IMR-90 (cell line): ENCODE measurements at regions of chr1 and their contacts with region 1.

Region 1: GRCh38 chr1:246566128-246566812 is at the starts of genes CNST and TFB2M:
- DNase-seq: peak; percentile 99
- ATAC-seq: peak; percentile 97
- H3K4me3 ChIP-seq: peak within 1 kb of the TSS; percentile 81
- H3K27ac ChIP-seq: peak within 1 kb of the TSS; percentile 73
- H3K4me1 ChIP-seq: peaks cover 5% of the 10 kb centered on the region; the same call in 1 of the 2 replicates
- H3K27me3 ChIP-seq: no peaks in the 10 kb centered on the region
- CTCF ChIP-seq: no peak
- POLR2A ChIP-seq: peak; percentile 90
- RAD21 ChIP-seq: no peak
- total RNA-seq, gene CNST: 25.5 and 32.8 TPM in 2 replicates
- total RNA-seq, gene TFB2M: 13.3 and 22.8 TPM in 2 replicates

Region 2: GRCh38 chr1:246261639-246262038 is 304.6 kb before region 1 on chr1:
- CTCF ChIA-PET with region 1: no interaction called
- POLR2A ChIA-PET with region 1: no interaction called
- dilution Hi-C with region 1: no loop called
- in situ Hi-C with region 1: no loop called
- intact Hi-C with region 1: no loop called
- DNase-seq: peak; percentile 8
- ATAC-seq: no peak
- H3K4me3 ChIP-seq: no peak overlapping the region
- H3K27ac ChIP-seq: no peak overlapping the region
- H3K4me1 ChIP-seq: no peaks in the 10 kb centered on the region
- H3K27me3 ChIP-seq: no peaks in the 10 kb centered on the region
- CTCF ChIP-seq: no peak; the same call in 1 of the 2 replicates
- POLR2A ChIP-seq: no peak
- RAD21 ChIP-seq: no peak

Region 3: GRCh38 chr1:246518441-246519205 is 47.6 kb before region 1 on chr1:
- CTCF ChIA-PET with region 1: no interaction called
- POLR2A ChIA-PET with region 1: no interaction called
- dilution Hi-C with region 1: no loop called
- in situ Hi-C with region 1: no loop called
- intact Hi-C with region 1: no loop called
- DNase-seq: no peak
- ATAC-seq: no peak
- H3K4me3 ChIP-seq: no peak overlapping the region
- H3K27ac ChIP-seq: no peak overlapping the region
- H3K4me1 ChIP-seq: no peaks in the 10 kb centered on the region
- H3K27me3 ChIP-seq: peaks cover 2% of the 10 kb centered on the region; the same call in 1 of the 2 replicates
- CTCF ChIP-seq: no peak
- POLR2A ChIP-seq: no peak
- RAD21 ChIP-seq: no peak

Region 4: DNA sequence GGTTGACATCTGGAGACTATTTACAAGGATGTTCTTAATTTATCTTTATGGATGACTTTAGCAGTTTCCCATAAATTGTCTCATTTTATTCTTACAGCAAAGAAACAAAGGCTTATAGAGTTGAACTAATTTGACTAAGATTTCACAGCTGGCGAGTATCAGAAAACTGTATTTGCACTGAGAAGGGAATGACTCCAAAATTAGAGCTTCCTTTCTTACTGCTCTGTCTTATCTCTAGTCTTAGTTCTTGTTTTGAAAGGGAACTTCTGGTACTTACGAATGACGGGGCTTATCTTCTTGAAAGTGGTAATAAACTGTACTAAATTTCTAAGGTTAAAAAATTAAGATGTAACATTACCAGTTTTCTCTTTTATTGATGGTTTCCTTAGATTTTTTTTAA is 13.5 kb after region 1 on chr1:
- CTCF ChIA-PET with region 1: interaction called, 4 read pairs
- POLR2A ChIA-PET with region 1: interaction called, 15 read pairs
- dilution Hi-C with region 1: no loop called
- in situ Hi-C with region 1: no loop called
- intact Hi-C with region 1: no loop called
- DNase-seq: no peak
- ATAC-seq: no peak
- H3K4me3 ChIP-seq: no peak overlapping the region
- H3K27ac ChIP-seq: no peak overlapping the region
- H3K4me1 ChIP-seq: peaks cover 16% of the 10 kb centered on the region
- H3K27me3 ChIP-seq: no peaks in the 10 kb centered on the region
- CTCF ChIP-seq: no peak
- POLR2A ChIP-seq: no peak
- RAD21 ChIP-seq: no peak

Region 5: GRCh38 chr1:246597340-246597739 is 31.1 kb after region 1 on chr1:
- CTCF ChIA-PET with region 1: no interaction called
- POLR2A ChIA-PET with region 1: no interaction called
- dilution Hi-C with region 1: no loop called
- in situ Hi-C with region 1: no loop called
- intact Hi-C with region 1: loop called (anchors 2 kb)
- DNase-seq: peak; percentile 94
- ATAC-seq: peak; percentile 63
- H3K4me3 ChIP-seq: no peak overlapping the region
- H3K27ac ChIP-seq: no peak overlapping the region
- H3K4me1 ChIP-seq: peaks cover 11% of the 10 kb centered on the region
- H3K27me3 ChIP-seq: no peaks in the 10 kb centered on the region
- CTCF ChIP-seq: no peak
- POLR2A ChIP-seq: peak; percentile 45; the same call in 1 of the 2 replicates
- RAD21 ChIP-seq: 0 out of 2 replicates have a peak, but pooled peaks have one; percentile 2

Region 6: GRCh38 chr1:246608616-246609376 is 42.5 kb after region 1 on chr1:
- CTCF ChIA-PET with region 1: interaction called, 3 read pairs
- POLR2A ChIA-PET with region 1: interaction called, 3 read pairs
- dilution Hi-C with region 1: no loop called
- in situ Hi-C with region 1: no loop called
- intact Hi-C with region 1: loop called (anchors 2 kb)
- DNase-seq: peak; percentile 97
- ATAC-seq: peak; percentile 94
- H3K4me3 ChIP-seq: no peak overlapping the region
- H3K27ac ChIP-seq: peak overlapping the region; percentile 62
- H3K4me1 ChIP-seq: peaks cover 8% of the 10 kb centered on the region
- H3K27me3 ChIP-seq: no peaks in the 10 kb centered on the region
- CTCF ChIP-seq: peak; percentile 43
- POLR2A ChIP-seq: no peak
- RAD21 ChIP-seq: peak; percentile 49

Region 7: GRCh38 chr1:246632281-246633087 is 66.2 kb after region 1 on chr1:
- CTCF ChIA-PET with region 1: no interaction called
- POLR2A ChIA-PET with region 1: no interaction called
- dilution Hi-C with region 1: no loop called
- in situ Hi-C with region 1: loop called (anchors 5 kb)
- intact Hi-C with region 1: loop called (anchors 1 kb)
- DNase-seq: peak; percentile 88
- ATAC-seq: peak; percentile 67
- H3K4me3 ChIP-seq: peak overlapping the region; percentile 37; the same call in 1 of the 2 replicates
- H3K27ac ChIP-seq: peak overlapping the region; percentile 97
- H3K4me1 ChIP-seq: peaks cover 18% of the 10 kb centered on the region
- H3K27me3 ChIP-seq: no peaks in the 10 kb centered on the region
- CTCF ChIP-seq: no peak
- POLR2A ChIP-seq: no peak
- RAD21 ChIP-seq: no peak

Region 8: DNA sequence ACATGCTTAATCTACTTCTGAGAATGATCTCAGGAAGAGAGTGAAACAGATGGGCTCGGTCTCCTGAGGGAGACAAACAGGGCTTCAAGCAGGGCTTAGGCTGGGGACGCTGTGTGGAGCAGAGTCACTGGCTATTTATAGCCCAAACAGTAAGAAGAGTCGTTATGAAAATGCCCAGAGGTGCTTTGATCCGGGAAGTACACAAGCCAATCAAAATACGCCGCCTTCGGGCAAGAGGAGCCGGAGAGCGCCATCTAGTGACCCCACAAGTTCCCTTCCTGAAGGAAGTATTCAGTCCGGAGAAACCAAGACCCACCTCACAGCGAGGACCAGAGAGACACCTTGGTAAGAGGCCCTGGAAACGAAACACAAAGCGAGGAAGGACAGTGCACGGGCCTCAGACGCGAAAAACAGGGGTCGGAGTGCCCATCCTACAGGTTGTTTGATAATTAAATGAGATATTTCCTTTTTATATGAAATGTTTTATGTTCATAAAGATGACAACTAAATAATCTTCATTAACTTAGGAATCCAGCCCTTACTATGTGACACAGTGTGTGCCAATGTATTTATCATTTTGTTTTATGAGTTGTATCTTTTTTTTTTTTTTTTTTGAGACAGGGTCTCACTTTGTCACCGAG is 132.9 kb after region 1 on chr1:
- CTCF ChIA-PET with region 1: no interaction called
- POLR2A ChIA-PET with region 1: no interaction called
- dilution Hi-C with region 1: no loop called
- in situ Hi-C with region 1: no loop called
- intact Hi-C with region 1: loop called (anchors 1 kb)
- DNase-seq: peak; percentile 96
- ATAC-seq: peak; percentile 95
- H3K4me3 ChIP-seq: peak overlapping the region; percentile 15; the same call in 1 of the 2 replicates
- H3K27ac ChIP-seq: peak overlapping the region; percentile 33; the same call in 1 of the 2 replicates
- H3K4me1 ChIP-seq: no peaks in the 10 kb centered on the region
- H3K27me3 ChIP-seq: no peaks in the 10 kb centered on the region
- CTCF ChIP-seq: peak; percentile 97
- POLR2A ChIP-seq: peak; percentile 32; the same call in 1 of the 2 replicates
- RAD21 ChIP-seq: peak; percentile 82

Region 9: GRCh38 chr1:246753670-246754535 is 187.6 kb after region 1 on chr1:
- CTCF ChIA-PET with region 1: interaction called, 3 read pairs
- POLR2A ChIA-PET with region 1: no interaction called
- dilution Hi-C with region 1: no loop called
- in situ Hi-C with region 1: no loop called
- intact Hi-C with region 1: loop called (anchors 5 kb)
- DNase-seq: peak; percentile 68
- ATAC-seq: peak; percentile 100
- H3K4me3 ChIP-seq: no peak overlapping the region
- H3K27ac ChIP-seq: no peak overlapping the region
- H3K4me1 ChIP-seq: no peaks in the 10 kb centered on the region
- H3K27me3 ChIP-seq: no peaks in the 10 kb centered on the region
- CTCF ChIP-seq: peak; percentile 83
- POLR2A ChIP-seq: no peak
- RAD21 ChIP-seq: peak; percentile 90